ENCODE measurements at regions of chr5 and their contacts with region 1.

Region 1: GRCh38 chr5:66864331-66864840 is 268.2 kb downstream of the MAST4 start:
- DNase-seq: no peak
- ATAC-seq: peak; percentile 30

Region 2: GRCh38 chr5:66814146-66814991 is 50.0 kb before region 1 on chr5:
- intact Hi-C with region 1: loop called (anchors 10 kb)
- DNase-seq: no peak
- ATAC-seq: peak; percentile 30